Cardiac septum (tissue), 1 donor: ENCODE measurements at regions of chr6 and their contacts with region 1.

Region 1: DNA sequence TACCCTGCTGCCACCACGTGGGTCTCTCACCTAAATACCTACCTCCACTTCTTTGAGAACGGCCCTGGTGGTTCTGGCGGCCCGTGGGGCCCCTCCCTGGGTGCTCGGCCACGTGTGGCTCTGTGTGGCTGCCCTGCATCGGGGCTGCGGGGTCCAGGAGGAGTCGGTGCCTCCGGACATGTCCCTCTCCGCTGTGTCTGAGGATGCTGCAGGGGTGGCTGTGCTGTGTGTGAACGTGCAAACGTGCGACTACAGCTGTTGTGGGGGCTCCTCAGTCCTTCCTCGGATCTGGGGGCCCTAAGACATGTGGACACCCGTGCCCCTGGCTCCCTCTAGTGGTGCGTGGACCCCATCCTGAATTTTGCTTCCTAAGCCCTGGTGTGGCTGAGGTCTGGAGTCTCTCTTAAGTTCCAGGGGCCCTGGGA is 691.8 kb downstream of the QKI start:
- DNase-seq: peak; percentile 82

Region 2: DNA sequence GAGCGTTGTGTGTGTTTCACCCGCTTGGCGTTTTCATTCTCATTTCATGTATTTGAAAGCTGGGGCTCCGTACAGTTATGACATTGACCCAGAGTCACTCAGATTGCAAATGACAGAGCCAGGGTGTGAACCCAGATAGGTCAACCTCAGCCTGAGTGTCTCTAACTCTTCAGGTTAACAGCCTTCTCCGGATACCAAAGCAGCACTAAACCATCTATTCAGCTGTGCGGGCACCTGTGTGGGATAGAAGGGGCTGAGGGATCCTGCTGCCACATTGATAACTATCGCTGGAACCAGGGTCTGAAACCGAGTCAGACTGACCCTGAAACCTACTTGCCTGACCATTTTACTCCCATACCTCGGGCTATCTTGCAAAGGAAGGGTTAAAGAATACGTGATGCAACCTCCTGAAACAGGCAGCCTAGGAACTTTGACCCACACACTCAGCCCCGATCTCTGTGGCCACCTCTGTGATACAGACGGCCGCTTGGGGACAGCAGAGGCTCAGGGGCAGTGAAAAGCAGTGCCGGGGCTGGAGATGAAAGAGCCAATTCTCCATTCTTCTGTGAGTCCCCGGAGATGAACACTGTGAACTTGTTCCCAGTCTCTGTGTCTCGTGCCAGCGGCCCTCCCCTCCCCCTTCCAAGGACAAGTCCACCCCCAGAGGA is 925.3 kb before region 1 on chr6:
- intact Hi-C with region 1: loop called (anchors 5 kb)
- DNase-seq: peak; percentile 89

Region 3: GRCh38 chr6:163413345-163414116 is 692.8 kb before region 1 on chr6:
- intact Hi-C with region 1: loop called (anchors 2 kb)
- DNase-seq: peak; percentile 96

Region 4: GRCh38 chr6:163579880-163580295 is 526.5 kb before region 1 on chr6:
- intact Hi-C with region 1: loop called (anchors 5 kb)
- DNase-seq: no peak

Region 5: GRCh38 chr6:163837691-163838431 is 268.5 kb before region 1 on chr6:
- intact Hi-C with region 1: loop called (anchors 10 kb)
- DNase-seq: no peak

Region 6: DNA sequence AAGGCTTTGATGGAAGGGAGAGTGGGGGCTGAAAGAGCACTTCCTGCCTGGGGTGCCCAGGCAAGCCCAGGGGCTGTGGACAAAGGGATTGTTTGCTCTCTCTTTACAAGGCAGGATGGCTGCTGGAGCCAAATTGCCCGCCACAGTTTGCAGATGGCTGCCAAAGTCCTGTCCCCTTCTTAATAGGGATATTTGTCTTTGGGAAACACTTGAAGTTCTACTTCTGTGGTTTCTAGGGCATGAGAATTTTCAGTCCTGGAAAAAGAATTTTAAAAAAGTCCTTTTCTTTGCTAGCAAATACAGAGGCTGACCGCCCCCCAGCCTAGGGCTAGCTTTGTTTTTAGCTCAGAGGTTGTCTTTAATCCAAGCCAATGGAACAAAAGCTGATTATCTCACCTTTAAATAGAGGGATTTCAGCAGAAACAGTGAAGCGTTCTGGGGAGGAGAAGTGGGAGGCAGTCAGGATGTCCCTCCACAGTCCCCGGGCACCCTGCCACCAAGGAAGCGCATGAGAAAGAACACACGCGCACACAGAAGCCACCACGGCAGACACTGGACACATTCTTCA is 44.9 kb after region 1 on chr6:
- intact Hi-C with region 1: loop called (anchors 5 kb)
- DNase-seq: peak; percentile 80